CD14-positive monocyte (primary cell): ENCODE measurements at regions of chr19 and their contacts with region 1.

Region 1: DNA sequence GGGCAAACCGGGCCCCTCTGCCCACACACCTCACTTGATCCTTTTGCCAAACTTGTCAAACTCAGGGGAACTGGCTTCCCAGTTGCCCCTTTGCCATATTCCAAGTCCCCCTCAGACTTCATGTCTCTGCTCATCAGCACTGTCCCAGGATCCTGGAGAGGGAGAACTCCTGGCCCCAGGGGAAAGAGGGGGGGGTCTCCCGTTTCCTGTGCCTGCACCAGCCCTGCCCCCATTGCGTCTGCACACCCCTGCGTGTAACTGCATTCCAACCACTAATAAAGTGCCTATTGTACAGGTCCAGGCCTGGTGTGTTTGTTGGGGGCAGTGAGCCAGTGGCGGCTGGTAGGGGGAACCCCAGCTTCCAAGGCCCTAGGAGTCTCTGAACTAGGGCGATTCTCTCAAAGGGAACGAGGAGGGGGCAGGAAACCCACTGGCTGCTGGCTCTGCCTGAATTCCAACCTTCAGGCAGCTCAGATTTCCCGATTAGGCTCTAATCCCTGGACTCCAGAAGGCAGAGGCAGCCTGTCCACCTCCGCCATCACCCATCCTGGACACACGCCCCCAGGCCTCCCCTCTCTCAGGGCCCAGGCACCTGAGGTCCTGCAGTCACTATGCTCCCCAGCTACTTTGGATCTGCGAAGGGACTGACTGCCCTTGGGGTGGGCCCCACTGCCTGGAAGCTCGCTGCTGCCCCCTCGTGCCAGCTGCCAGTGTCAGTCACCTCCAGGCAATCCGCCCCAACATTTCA is 9.7 kb upstream of the ILF3 start:
- DNase-seq: peak; percentile 65 to 73 (median 70)
- H3K4me3 ChIP-seq: no peak overlapping the region
- H3K4me3 Mint-ChIP-seq: no peak overlapping the region
- H3K27ac ChIP-seq: no peak overlapping the region
- H3K27ac Mint-ChIP-seq: peak overlapping the region in 1 of 7 donors; percentile 25
- H3K4me1 ChIP-seq: peaks cover 5 to 17% of the 10 kb centered on the region in 2 donors
- H3K4me1 Mint-ChIP-seq: peaks cover 25% of the 10 kb centered on the region
- H3K27me3 ChIP-seq: peaks cover 0 to 11% of the 10 kb centered on the region in 2 donors
- H3K27me3 Mint-ChIP-seq: peaks cover 16 to 25% (median 19%) of the 10 kb centered on the region in 3 donors
- CTCF ChIP-seq: peak; percentile 90

Region 2: DNA sequence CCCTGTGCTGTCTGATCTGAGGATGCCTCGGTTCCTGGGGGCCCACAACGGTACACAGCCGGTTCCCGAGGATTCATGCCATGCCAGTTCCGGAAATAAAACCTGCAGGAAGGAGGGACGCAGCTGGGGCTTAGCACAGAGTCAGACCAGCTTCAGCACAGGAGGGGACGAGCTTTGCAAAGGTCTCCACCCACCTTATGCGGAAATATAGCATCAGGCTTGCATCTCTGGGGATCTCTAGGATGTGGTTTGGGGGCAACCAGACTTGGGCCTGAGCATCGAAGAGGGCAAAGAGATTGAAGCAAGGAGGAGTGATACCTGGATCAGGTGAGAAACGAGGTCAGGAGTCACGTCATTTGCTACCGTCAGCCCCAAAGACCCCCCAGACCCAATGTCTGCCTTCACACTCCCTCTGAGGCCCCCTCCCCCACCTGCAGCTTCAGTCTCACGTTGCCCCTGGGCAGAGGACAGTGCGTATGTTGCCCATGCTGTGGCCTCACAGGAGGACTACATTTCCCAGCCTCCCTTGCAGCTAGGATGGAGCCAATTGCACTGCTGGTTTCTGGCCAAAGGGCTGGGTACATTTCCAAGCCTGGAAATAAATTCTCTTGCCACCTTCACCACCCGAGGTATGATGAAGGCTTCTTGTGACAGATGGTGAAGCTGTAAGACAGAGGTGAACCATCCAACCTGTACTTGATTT is 276.2 kb before region 1 on chr19:
- intact Hi-C with region 1: no loop called
- DNase-seq: no peak
- H3K4me3 ChIP-seq: no peak overlapping the region
- H3K4me3 Mint-ChIP-seq: no peak overlapping the region
- H3K27ac ChIP-seq: no peak overlapping the region
- H3K27ac Mint-ChIP-seq: peak overlapping the region in 3 of 7 donors; percentile 15 to 63 (median 57)
- H3K4me1 ChIP-seq: peaks cover 12 to 15% of the 10 kb centered on the region in 2 donors
- H3K4me1 Mint-ChIP-seq: peaks cover 11% of the 10 kb centered on the region
- H3K27me3 ChIP-seq: no peaks in the 10 kb centered on the region
- H3K27me3 Mint-ChIP-seq: peaks cover 0 to 2% (median 0%) of the 10 kb centered on the region in 3 donors
- CTCF ChIP-seq: no peak

Region 3: GRCh38 chr19:10580979-10581631 is 63.3 kb before region 1 on chr19:
- intact Hi-C with region 1: loop called (anchors 1 kb)
- DNase-seq: peak; percentile 83 to 93 (median 87)
- H3K4me3 ChIP-seq: no peak overlapping the region
- H3K4me3 Mint-ChIP-seq: peak overlapping the region in 1 of 2 donors; percentile 21
- H3K27ac ChIP-seq: no peak overlapping the region
- H3K27ac Mint-ChIP-seq: peak overlapping the region in 1 of 7 donors; percentile 50
- H3K4me1 ChIP-seq: peaks cover 0 to 3% of the 10 kb centered on the region in 2 donors
- H3K4me1 Mint-ChIP-seq: peaks cover 16% of the 10 kb centered on the region
- H3K27me3 ChIP-seq: no peaks in the 10 kb centered on the region
- H3K27me3 Mint-ChIP-seq: peaks cover 3 to 11% (median 10%) of the 10 kb centered on the region in 3 donors
- CTCF ChIP-seq: peak; percentile 98

Region 4: DNA sequence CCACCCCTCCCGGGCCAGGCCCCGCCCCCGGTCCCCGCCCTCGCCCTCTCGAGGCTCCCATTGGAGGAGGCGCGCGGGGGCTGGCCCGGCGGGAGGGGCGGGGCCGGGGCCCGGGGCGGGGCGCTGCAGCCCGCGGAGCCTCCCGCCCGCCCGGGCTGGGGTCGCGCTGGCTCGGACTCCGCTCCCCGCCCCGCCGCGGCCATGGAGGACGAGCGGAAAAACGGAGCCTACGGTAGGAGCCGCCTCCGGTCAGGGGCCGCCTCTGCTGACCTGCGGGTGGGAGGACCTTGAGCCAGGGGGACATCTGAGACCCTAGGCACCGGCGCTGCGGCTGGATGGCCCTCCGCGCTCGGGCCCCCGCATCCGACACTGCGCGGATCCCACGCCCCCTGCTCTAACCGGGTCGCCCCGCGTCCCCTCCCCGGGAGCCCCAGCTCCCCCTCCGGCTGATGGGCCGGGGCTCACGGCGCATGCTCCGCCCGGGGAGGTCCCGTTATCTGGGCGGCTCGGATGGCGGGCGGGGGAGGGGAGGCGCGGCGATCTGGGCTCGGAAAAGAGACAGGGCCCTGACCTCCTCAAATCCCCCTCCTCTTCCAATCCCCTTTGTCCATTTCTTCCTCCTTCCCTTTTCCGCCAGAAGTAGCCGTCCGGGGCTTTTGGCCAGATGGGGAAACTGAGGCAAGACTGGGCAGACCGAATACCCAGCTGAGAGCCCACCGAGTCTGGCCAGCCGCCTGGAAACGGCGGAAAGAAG is 41.9 kb before region 1 on chr19:
- intact Hi-C with region 1: loop called in 1 of 2 experiments (anchors 5 kb)
- DNase-seq: peak; percentile 62 to 73 (median 70)
- H3K4me3 ChIP-seq: peak overlapping the region; percentile 92 to 95 (median 92)
- H3K4me3 Mint-ChIP-seq: peak overlapping the region; percentile 89 to 92
- H3K27ac ChIP-seq: peak overlapping the region; percentile 75 to 79
- H3K27ac Mint-ChIP-seq: peak overlapping the region; percentile 87 to 95 (median 92)
- H3K4me1 ChIP-seq: peaks cover 29 to 35% of the 10 kb centered on the region in 2 donors
- H3K4me1 Mint-ChIP-seq: peaks cover 30% of the 10 kb centered on the region
- H3K27me3 ChIP-seq: no peaks in the 10 kb centered on the region
- H3K27me3 Mint-ChIP-seq: peaks cover 1 to 5% (median 3%) of the 10 kb centered on the region in 3 donors
- CTCF ChIP-seq: no peak